ENCODE measurements at regions of chr4 and their contacts with region 1.

Region 1: DNA sequence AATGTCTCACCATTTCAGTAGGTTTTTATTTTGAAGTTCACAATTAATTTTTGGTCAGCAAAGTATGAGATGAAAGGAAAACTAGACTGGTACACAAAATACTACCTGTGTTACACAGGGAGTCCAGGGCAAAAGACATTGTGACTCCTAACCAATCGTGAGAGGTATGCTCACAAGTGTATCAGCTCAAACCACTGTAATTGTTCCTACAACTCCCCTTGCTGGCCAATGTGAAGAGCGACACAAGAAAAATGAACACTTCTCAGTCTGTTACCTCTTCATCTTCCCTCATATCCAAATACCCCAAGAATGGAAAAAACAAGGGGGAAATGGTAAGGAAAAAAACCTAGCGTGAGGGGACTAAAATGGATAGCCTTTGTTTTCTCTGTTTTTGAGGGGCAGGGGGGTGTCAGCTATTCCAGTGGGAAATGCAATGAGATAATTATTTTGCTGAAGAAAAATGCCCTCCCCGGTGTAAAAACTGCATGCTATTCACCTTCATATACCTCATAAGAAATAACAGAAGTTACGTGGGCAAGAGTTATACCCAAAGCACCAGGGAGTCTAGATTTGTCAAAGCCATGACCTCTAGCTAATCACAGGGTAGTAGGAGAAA is 30.6 kb upstream of the NSUN7 start:
- DNase-seq: no peak
- H3K4me3 Mint-ChIP-seq: no peak overlapping the region
- H3K27ac Mint-ChIP-seq: no peak overlapping the region
- H3K4me1 Mint-ChIP-seq: peaks cover 35% of the 10 kb centered on the region
- H3K27me3 Mint-ChIP-seq: no peaks in the 10 kb centered on the region

Region 2: GRCh38 chr4:40438384-40439026 is 280.6 kb before region 1 on chr4:
- intact Hi-C with region 1: loop called (anchors 5 kb)
- DNase-seq: no peak
- H3K4me3 Mint-ChIP-seq: no peak overlapping the region
- H3K27ac Mint-ChIP-seq: no peak overlapping the region
- H3K4me1 Mint-ChIP-seq: peaks cover 45% of the 10 kb centered on the region
- H3K27me3 Mint-ChIP-seq: no peaks in the 10 kb centered on the region

Region 3: GRCh38 chr4:40579983-40580382 is 139.1 kb before region 1 on chr4:
- intact Hi-C with region 1: loop called (anchors 2 kb)
- DNase-seq: no peak
- H3K4me3 Mint-ChIP-seq: no peak overlapping the region
- H3K27ac Mint-ChIP-seq: peak overlapping the region; percentile 38
- H3K4me1 Mint-ChIP-seq: peaks cover 56% of the 10 kb centered on the region
- H3K27me3 Mint-ChIP-seq: peaks cover 1% of the 10 kb centered on the region

Region 4: GRCh38 chr4:40672536-40673526 is 46.3 kb before region 1 on chr4:
- intact Hi-C with region 1: loop called (anchors 1 kb)
- DNase-seq: peak; percentile 63
- H3K4me3 Mint-ChIP-seq: peak overlapping the region; percentile 51
- H3K27ac Mint-ChIP-seq: peak overlapping the region; percentile 90
- H3K4me1 Mint-ChIP-seq: peaks cover 53% of the 10 kb centered on the region
- H3K27me3 Mint-ChIP-seq: no peaks in the 10 kb centered on the region

Region 5: DNA sequence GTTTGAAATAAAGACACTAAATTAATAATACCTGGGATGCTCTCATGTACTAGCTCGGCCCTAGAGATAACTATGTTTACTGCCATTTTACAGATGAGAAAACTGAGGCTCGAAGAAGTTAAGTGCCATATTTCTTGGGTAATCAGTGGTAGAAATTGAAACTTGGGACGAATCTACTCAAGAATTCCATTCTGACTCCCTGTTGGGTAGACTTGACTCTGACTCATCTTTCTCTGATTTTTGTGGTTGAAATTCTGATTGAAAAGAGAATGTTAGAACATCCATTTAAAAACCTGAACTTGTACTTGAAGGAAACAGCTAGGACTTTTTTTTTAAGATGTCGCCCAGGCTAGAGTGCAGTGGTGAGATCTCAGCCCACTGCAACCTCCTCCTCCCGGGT is 19.5 kb before region 1 on chr4:
- intact Hi-C with region 1: loop called (anchors 1 kb)
- DNase-seq: no peak
- H3K4me3 Mint-ChIP-seq: peak overlapping the region; percentile 2
- H3K27ac Mint-ChIP-seq: peak overlapping the region; percentile 74
- H3K4me1 Mint-ChIP-seq: peaks cover 37% of the 10 kb centered on the region
- H3K27me3 Mint-ChIP-seq: no peaks in the 10 kb centered on the region

Region 6: GRCh38 chr4:40800064-40800463 is 80.9 kb after region 1 on chr4:
- intact Hi-C with region 1: no loop called
- DNase-seq: no peak
- H3K4me3 Mint-ChIP-seq: no peak overlapping the region
- H3K27ac Mint-ChIP-seq: no peak overlapping the region
- H3K4me1 Mint-ChIP-seq: no peaks in the 10 kb centered on the region
- H3K27me3 Mint-ChIP-seq: peaks cover 7% of the 10 kb centered on the region